ENCODE measurements at regions of chr2 and their contacts with region 1.

Region 1: DNA sequence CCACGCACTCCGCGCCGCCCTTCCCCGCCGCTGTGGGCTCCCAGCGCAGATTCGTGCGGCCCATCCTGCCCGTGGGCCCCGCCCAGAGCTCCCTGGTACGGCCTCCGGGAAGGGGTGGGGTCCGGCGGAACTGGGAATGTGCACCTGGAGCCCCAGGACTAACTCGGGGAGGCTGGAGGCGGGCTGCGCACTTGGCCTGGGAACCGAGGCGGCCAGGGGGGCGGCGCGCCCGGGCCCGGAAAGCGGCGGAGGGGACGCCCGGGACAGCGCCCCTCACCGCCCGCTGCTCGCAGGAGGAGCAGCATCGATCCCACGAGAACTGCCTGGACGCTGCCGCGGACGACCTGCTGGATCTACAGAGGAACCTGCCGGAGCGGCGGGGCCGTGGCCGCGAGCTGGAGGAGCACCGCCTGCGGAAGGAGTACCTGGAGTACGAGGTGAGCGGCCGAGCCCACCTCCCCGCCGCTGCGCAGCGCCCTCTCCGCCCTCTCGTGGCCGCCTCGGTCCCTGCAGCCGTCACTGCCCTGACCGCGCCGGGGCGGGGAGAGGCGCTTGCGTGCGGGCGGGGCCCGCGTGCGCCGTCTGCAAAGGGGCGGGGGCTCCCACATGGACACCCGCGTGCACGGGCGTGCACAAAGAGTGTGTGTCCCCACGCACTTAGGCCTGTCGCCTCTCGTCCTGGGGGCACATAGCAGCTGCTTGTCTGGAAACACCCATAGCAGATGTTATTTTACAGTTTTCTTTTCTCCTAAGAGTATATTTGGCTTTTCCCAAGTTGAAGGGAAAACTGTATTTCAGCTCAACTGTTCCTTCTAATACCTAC is 25.2 kb downstream of the PSD4 start:
- DNase-seq: peak; percentile 85
- H3K4me3 Mint-ChIP-seq: no peak overlapping the region
- H3K27ac Mint-ChIP-seq: peak overlapping the region; percentile 58
- H3K4me1 Mint-ChIP-seq: peaks cover 26% of the 10 kb centered on the region
- H3K27me3 Mint-ChIP-seq: no peaks in the 10 kb centered on the region

Region 2: GRCh38 chr2:112636231-112636960 is 562.6 kb before region 1 on chr2:
- CTCF ChIA-PET with region 1: no interaction called
- POLR2A ChIA-PET with region 1: no interaction called
- intact Hi-C with region 1: no loop called
- DNase-seq: peak; percentile 73
- H3K4me3 Mint-ChIP-seq: no peak overlapping the region
- H3K27ac Mint-ChIP-seq: no peak overlapping the region
- H3K4me1 Mint-ChIP-seq: peaks cover 67% of the 10 kb centered on the region
- H3K27me3 Mint-ChIP-seq: no peaks in the 10 kb centered on the region

Region 3: DNA sequence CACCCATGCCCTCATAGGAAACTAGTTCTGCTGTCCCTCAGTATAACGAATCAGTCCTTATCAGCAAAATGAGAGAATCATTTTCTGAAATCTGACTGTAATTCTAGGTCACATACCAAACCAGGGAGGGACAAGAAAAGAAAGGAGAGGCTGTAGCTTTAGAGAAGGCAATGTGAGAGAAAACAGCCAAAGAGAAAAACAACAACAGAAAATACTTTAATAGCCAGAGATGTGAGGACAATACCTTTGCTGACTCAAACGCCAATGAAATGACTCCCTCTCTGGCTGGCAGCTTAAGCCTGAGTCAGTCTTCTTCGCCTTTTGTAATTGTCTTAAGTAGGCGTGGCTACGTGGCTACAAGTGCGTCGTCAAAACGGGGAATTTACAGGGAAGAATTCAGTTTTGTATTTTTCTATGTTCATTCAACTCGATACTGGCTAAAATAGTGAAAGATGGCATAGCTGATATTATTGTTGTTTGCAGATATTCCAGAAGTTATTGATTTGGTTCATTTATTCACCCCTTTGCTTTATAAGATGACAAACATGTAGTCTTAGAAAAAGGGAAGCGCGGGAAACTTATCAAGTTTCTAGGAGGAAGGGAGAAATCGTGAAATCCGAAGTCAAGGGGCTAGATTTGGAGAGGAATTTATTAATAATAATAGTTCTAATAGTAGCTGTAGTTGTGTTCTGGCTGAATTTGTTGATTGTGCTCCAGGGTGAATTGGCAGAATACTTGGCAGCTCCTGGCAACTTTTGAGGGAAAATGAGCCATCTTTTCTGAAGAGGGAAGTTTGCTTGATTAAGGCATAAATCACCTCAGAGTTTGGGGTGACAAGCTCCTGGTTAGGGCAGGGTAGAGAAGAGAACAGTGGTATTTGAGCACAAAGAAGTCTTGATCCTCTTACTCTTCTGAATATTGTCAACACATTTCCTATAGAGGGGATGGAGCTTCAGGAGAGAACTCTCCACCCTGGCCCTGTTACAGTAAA is 414.5 kb before region 1 on chr2 and contains the start of gene IL1A:
- CTCF ChIA-PET with region 1: no interaction called
- POLR2A ChIA-PET with region 1: no interaction called
- intact Hi-C with region 1: no loop called
- DNase-seq: peak; percentile 42
- H3K4me3 Mint-ChIP-seq: peak within 1 kb of the TSS; percentile 34
- H3K27ac Mint-ChIP-seq: no peak within 1 kb of the TSS
- H3K4me1 Mint-ChIP-seq: peaks cover 3% of the 10 kb centered on the region
- H3K27me3 Mint-ChIP-seq: peaks cover 4% of the 10 kb centered on the region
- total RNA-seq, gene IL1A: 15.7 to 16.4 TPM

Region 4: GRCh38 chr2:113098041-113098440 is 101.0 kb before region 1 on chr2:
- CTCF ChIA-PET with region 1: interaction called, 11 read pairs
- POLR2A ChIA-PET with region 1: no interaction called
- intact Hi-C with region 1: no loop called
- DNase-seq: peak; percentile 58
- H3K4me3 Mint-ChIP-seq: peak overlapping the region; percentile 70
- H3K27ac Mint-ChIP-seq: peak overlapping the region; percentile 88
- H3K4me1 Mint-ChIP-seq: peaks cover 32% of the 10 kb centered on the region
- H3K27me3 Mint-ChIP-seq: peaks cover 5% of the 10 kb centered on the region

Region 5: DNA sequence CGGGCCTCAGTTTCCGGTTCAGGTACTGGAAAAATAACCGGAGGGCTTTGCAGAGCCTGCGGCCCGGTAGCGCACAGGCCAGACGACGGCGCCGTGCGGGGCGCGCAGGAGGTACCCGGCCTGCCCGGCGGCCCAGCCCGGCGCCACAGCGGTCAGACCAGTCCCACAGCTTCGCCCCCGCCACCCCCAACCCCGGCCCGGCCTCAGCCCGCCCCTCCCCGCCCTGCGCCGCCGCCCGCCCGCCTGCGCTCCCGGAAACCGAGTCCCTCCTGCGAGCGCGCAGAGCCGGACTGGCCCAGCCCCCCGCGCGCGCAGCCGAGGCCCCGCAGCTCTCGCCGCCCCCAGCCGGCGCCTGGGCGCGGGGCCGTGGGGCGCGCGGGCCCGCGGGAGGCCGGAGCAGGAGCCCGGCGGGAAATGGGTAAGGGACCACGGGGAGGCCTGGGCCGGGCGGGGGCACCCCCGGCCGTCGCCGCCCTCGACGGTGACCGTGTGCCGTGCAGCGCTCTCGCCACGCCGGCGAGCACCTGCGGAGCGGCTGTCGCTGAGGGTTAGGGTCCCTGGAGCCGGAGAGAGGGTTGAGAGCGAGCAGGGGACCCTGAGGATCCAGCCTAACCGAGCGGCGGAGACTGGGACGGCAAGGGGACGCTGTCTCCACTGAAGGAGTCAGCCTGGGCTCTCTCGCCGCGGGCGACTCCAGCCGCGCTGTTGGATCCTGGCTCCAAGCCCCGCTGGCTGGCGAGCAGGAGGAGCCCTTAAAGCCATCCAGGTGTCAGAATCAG is 41.7 kb before region 1 on chr2:
- CTCF ChIA-PET with region 1: interaction called, 12 read pairs
- POLR2A ChIA-PET with region 1: interaction called, 4 read pairs
- intact Hi-C with region 1: no loop called
- DNase-seq: peak; percentile 66
- H3K4me3 Mint-ChIP-seq: peak overlapping the region; percentile 81
- H3K27ac Mint-ChIP-seq: peak overlapping the region; percentile 79
- H3K4me1 Mint-ChIP-seq: peaks cover 22% of the 10 kb centered on the region
- H3K27me3 Mint-ChIP-seq: no peaks in the 10 kb centered on the region

Region 6: GRCh38 chr2:113173542-113174395 is 25.2 kb before region 1 on chr2 and contains the start of gene PSD4:
- CTCF ChIA-PET with region 1: interaction called, 31 read pairs
- POLR2A ChIA-PET with region 1: interaction called, 21 read pairs
- intact Hi-C with region 1: no loop called
- DNase-seq: peak; percentile 95
- H3K4me3 Mint-ChIP-seq: peak within 1 kb of the TSS; percentile 95
- H3K27ac Mint-ChIP-seq: peak within 1 kb of the TSS; percentile 94
- H3K4me1 Mint-ChIP-seq: peaks cover 74% of the 10 kb centered on the region
- H3K27me3 Mint-ChIP-seq: peaks cover 2% of the 10 kb centered on the region
- total RNA-seq, gene PSD4: 156 to 170 TPM

Region 7: DNA sequence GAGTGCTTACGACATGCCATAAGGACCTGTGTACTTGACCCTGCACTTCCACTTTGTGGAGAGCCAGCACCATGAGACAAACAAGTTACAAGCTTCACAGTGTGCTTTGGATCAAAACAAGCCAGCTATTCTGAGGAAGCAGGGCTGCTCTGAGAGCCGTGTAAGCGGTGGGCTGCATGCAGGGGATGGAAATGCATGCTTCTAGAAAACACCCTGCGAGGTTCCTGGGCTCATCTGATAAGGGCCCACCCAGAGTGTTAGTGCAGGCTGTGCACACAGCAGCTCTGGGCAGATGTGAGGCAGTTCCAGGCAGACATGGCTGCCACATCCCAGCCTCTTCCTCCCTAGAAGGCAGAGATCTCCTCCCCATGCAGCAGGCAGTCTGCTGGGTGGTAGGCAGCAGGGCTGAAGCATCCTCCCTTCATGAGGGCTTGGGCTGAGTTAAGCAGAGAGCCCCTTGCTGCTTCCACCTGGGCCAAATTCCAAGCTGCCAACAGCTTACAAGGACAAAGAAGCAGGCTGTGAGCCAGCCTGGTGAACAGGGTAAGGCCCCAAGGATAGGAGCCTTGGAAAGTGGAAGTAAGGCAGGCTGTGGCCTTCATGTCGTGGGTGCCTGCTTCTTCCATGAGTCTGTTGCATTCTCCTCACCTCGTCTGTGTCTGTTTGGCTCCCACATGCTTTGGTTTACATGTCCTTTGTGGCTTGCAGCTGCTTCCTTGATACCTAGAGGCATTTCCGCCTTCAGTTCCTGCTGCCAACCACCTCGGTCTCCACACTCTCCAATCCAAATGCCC is 17.5 kb before region 1 on chr2:
- CTCF ChIA-PET with region 1: interaction called, 31 read pairs
- POLR2A ChIA-PET with region 1: interaction called, 7 read pairs
- intact Hi-C with region 1: no loop called
- DNase-seq: no peak
- H3K4me3 Mint-ChIP-seq: no peak overlapping the region
- H3K27ac Mint-ChIP-seq: peak overlapping the region; percentile 55
- H3K4me1 Mint-ChIP-seq: peaks cover 95% of the 10 kb centered on the region
- H3K27me3 Mint-ChIP-seq: no peaks in the 10 kb centered on the region

Region 8: GRCh38 chr2:113187771-113188170 is 11.2 kb before region 1 on chr2:
- CTCF ChIA-PET with region 1: interaction called, 15 read pairs
- POLR2A ChIA-PET with region 1: interaction called, 3 read pairs
- intact Hi-C with region 1: no loop called
- DNase-seq: no peak
- H3K4me3 Mint-ChIP-seq: no peak overlapping the region
- H3K27ac Mint-ChIP-seq: peak overlapping the region; percentile 42
- H3K4me1 Mint-ChIP-seq: peaks cover 58% of the 10 kb centered on the region
- H3K27me3 Mint-ChIP-seq: no peaks in the 10 kb centered on the region

Region 9: DNA sequence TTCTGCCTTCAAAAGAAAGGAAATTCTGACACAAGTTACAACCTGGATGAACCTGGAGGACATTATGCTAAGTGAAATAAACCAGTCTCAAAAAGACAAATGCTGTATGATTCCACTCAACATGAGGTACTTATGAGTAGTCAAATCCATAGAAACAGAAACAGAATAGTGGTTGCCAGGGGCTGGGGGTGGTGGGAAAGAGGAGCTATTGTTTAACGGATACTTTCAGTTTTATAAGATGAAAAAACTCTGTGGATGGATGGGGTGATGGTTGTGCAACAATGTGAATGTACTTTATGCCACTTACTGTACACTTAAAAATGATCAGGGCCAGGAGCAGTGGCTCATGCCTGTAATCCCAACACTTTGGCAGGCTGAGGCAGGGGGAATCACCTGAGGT is 542.1 kb after region 1 on chr2:
- CTCF ChIA-PET with region 1: no interaction called
- POLR2A ChIA-PET with region 1: no interaction called
- intact Hi-C with region 1: no loop called
- DNase-seq: no peak
- H3K4me3 Mint-ChIP-seq: no peak overlapping the region
- H3K27ac Mint-ChIP-seq: no peak overlapping the region
- H3K4me1 Mint-ChIP-seq: no peaks in the 10 kb centered on the region
- H3K27me3 Mint-ChIP-seq: no peaks in the 10 kb centered on the region